Panc1 (cell line): ENCODE measurements at regions of chr16 and their contacts with region 1.

Region 1: GRCh38 chr16:14454391-14454790 is 175.7 kb downstream of the PARN start:
- DNase-seq: no peak
- ATAC-seq: no peak
- H3K4me3 ChIP-seq: no peak overlapping the region
- H3K27ac ChIP-seq: no peak overlapping the region
- H3K4me1 ChIP-seq: no peaks in the 10 kb centered on the region
- H3K27me3 ChIP-seq: no peaks in the 10 kb centered on the region
- CTCF ChIP-seq: no peak

Region 2: GRCh38 chr16:14464796-14465360 is 10.5 kb after region 1 on chr16:
- CTCF ChIA-PET with region 1: no interaction called
- POLR2A ChIA-PET with region 1: no interaction called
- in situ Hi-C with region 1: no loop called
- intact Hi-C with region 1: no loop called
- DNase-seq: no peak
- ATAC-seq: no peak
- H3K4me3 ChIP-seq: no peak overlapping the region
- H3K27ac ChIP-seq: no peak overlapping the region
- H3K4me1 ChIP-seq: no peaks in the 10 kb centered on the region
- H3K27me3 ChIP-seq: no peaks in the 10 kb centered on the region
- CTCF ChIP-seq: no peak

Region 3: DNA sequence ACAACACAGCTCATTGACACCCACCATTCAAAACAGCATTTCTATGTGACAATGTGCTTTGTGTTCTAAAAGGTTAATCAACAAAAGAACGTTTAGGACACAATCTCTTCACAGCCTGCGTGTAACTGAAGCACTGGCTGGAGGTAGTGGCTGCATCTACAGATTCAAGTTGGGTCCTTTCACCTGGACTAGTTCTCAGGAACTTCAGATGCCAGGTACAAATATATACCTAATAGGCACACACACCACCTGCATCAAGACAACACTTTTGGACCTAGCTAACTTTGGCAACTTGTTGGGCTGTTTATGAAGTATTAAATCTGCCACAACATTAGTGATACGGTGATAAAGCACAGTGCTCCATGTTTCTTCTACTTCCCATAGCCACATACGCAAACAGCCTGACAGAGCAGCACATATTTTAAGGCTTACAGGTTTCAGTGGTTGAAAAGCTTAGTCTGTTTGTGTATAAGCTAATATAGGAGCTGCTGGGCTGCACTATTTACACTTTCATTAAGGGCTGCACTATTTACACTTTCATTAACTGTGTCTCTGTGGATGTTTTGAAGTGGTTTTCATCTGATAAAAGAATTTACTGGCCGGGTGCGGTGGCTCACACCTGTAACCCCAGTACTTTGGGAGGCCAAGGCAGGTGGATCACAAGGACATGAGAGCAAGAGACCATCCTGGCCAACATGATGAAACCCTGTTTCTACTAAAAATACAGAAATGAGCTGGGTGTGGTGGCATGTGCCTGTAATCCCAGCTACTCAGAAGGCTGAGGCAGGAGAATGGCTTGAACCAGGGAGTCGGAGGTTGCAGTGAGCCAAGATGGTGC is 43.1 kb after region 1 on chr16:
- CTCF ChIA-PET with region 1: no interaction called
- POLR2A ChIA-PET with region 1: interaction called, 11 read pairs
- in situ Hi-C with region 1: no loop called
- intact Hi-C with region 1: no loop called
- DNase-seq: no peak
- ATAC-seq: no peak
- H3K4me3 ChIP-seq: no peak overlapping the region
- H3K27ac ChIP-seq: no peak overlapping the region
- H3K4me1 ChIP-seq: peaks cover 18% of the 10 kb centered on the region
- H3K27me3 ChIP-seq: no peaks in the 10 kb centered on the region
- CTCF ChIP-seq: no peak

Region 4: GRCh38 chr16:14514967-14515366 is 60.6 kb after region 1 on chr16:
- CTCF ChIA-PET with region 1: no interaction called
- POLR2A ChIA-PET with region 1: no interaction called
- in situ Hi-C with region 1: no loop called
- intact Hi-C with region 1: loop called (anchors 5 kb)
- DNase-seq: no peak
- ATAC-seq: no peak
- H3K4me3 ChIP-seq: no peak overlapping the region
- H3K27ac ChIP-seq: no peak overlapping the region
- H3K4me1 ChIP-seq: no peaks in the 10 kb centered on the region
- H3K27me3 ChIP-seq: no peaks in the 10 kb centered on the region
- CTCF ChIP-seq: no peak

Region 5: DNA sequence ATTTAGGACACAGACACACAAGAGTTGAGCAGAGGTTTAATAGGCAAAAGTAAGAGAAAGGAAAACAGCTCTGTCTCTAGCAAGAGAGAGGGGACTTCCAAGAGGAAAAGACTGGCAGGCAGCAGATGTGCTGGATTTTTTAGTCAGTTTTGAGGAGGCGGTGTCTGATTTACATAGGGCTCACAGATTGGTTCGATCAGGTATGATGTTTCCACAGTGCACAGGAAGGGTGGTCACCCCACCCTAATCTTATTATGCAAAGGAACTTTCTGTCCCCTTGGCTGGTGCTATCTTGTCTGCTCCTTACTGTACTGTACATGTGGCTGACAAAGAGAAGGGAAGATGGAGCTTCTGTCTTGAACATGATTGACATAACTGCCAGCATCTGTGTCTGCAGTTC is 203.7 kb after region 1 on chr16:
- CTCF ChIA-PET with region 1: no interaction called
- POLR2A ChIA-PET with region 1: no interaction called
- in situ Hi-C with region 1: no loop called
- intact Hi-C with region 1: no loop called
- DNase-seq: no peak
- ATAC-seq: no peak
- H3K4me3 ChIP-seq: no peak overlapping the region
- H3K27ac ChIP-seq: no peak overlapping the region
- H3K4me1 ChIP-seq: no peaks in the 10 kb centered on the region
- H3K27me3 ChIP-seq: no peaks in the 10 kb centered on the region
- CTCF ChIP-seq: no peak